CD8-positive, alpha-beta T cell (primary cell): ENCODE measurements at regions of chr10 and their contacts with region 1.

Region 1: DNA sequence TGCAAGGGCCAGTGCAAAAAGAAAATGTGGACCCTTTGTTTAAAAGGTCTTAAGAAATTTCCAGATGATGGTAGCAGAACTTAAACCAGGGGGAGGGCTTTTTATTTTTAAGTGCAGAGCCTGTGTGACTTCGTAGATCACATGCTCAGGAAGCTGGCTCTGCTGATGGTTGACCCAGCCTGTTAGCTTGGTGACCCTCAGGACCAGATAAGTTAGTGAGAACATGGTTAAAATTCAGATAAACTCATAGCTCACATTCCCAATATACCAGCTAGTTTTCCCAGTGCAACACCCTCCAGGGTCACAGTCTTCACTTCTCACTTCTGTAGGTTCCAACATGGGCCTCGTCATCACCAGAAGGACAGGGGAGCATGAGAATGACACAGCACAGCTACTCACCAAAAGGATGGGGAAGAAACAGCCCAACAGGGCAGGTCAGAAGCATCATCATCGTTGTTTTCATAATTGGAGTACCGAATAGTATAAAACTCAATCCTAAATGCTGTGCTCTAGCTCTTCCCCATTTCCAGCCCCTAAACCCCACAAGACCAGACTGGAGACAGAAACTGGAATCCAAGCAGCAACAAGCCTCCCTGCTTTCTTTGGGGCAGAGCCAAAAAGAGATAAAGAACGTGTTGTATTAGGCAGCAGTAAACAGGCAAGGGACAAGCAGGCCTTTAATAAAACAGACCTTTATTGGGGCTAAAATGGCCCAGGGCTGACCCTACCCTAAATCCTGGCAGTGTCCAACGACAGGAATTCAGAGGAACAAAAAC is 102.2 kb upstream of the ANKRD1 start:
- DNase-seq: no peak
- ATAC-seq: no peak
- H3K4me3 ChIP-seq: no peak overlapping the region
- H3K4me3 Mint-ChIP-seq: no peak overlapping the region
- H3K27ac ChIP-seq: no peak overlapping the region
- H3K27ac Mint-ChIP-seq: no peak overlapping the region
- H3K4me1 ChIP-seq: no peaks in the 10 kb centered on the region
- H3K4me1 Mint-ChIP-seq: no peaks in the 10 kb centered on the region
- H3K27me3 ChIP-seq: no peaks in the 10 kb centered on the region
- H3K27me3 Mint-ChIP-seq: no peaks in the 10 kb centered on the region
- CTCF ChIP-seq: no peak

Region 2: GRCh38 chr10:92567952-92568600 is 1545.0 kb after region 1 on chr10:
- CTCF ChIA-PET with region 1: no interaction called
- POLR2A ChIA-PET with region 1: no interaction called
- intact Hi-C with region 1: loop called in 1 of 2 experiments (anchors 5 kb)
- DNase-seq: no peak
- ATAC-seq: no peak
- H3K4me3 ChIP-seq: no peak overlapping the region
- H3K4me3 Mint-ChIP-seq: no peak overlapping the region
- H3K27ac ChIP-seq: no peak overlapping the region
- H3K27ac Mint-ChIP-seq: no peak overlapping the region
- H3K4me1 ChIP-seq: peaks cover 11% of the 10 kb centered on the region
- H3K4me1 Mint-ChIP-seq: peaks cover 55% of the 10 kb centered on the region
- H3K27me3 ChIP-seq: no peaks in the 10 kb centered on the region
- H3K27me3 Mint-ChIP-seq: no peaks in the 10 kb centered on the region
- CTCF ChIP-seq: no peak